Gastrocnemius medialis (tissue), 4 donors: ENCODE measurements at regions of chr3 and their contacts with region 1.

Region 1: GRCh38 chr3:12568747-12569146 is 11.9 kb downstream of the MKRN2 start:
- DNase-seq: no peak
- ATAC-seq: peak in 1 of 2 donors; percentile 43
- H3K4me3 ChIP-seq: no peak overlapping the region
- H3K27ac ChIP-seq: peak overlapping the region in 1 of 4 donors; percentile 6
- H3K4me1 ChIP-seq: peaks cover 14 to 20% of the 10 kb centered on the region in 2 donors
- H3K27me3 ChIP-seq: no peaks in the 10 kb centered on the region
- CTCF ChIP-seq: no peak
- POLR2A ChIP-seq: no peak

Region 2: DNA sequence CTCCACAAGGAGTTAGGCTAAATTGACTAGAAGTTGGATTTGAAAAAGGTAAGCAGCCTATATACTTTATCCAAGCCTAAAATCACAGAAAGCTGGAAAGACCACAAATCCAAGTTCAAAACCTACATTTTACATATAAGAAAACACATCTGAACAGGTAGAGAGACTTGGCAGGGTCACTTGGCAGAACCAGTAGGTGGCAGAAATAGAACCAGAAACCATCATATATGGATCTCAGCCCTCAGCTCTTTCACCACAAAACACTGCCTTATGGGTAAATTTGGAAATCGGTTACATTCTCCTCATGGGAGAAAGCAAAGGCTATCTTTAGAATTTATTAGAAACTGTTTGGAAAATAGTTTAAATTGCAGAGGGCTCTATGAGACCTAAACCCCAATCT is 32.3 kb after region 1 on chr3:
- in situ Hi-C with region 1: no loop called
- intact Hi-C with region 1: loop called (anchors 5 kb)
- DNase-seq: no peak
- ATAC-seq: no peak
- H3K4me3 ChIP-seq: no peak overlapping the region
- H3K27ac ChIP-seq: peak overlapping the region in 3 of 4 donors; percentile 2 to 27 (median 12)
- H3K4me1 ChIP-seq: peaks cover 0 to 7% of the 10 kb centered on the region in 2 donors
- H3K27me3 ChIP-seq: no peaks in the 10 kb centered on the region
- CTCF ChIP-seq: no peak
- POLR2A ChIP-seq: no peak

Region 3: GRCh38 chr3:12758025-12758830 is 189.5 kb after region 1 on chr3:
- in situ Hi-C with region 1: no loop called
- intact Hi-C with region 1: no loop called
- DNase-seq: peak in 1 of 2 donors; percentile 30
- ATAC-seq: peak; percentile 19
- H3K4me3 ChIP-seq: no peak overlapping the region
- H3K27ac ChIP-seq: peak overlapping the region; percentile 1 to 65 (median 35)
- H3K4me1 ChIP-seq: peaks cover 8 to 12% of the 10 kb centered on the region in 2 donors
- H3K27me3 ChIP-seq: no peaks in the 10 kb centered on the region
- CTCF ChIP-seq: no peak
- POLR2A ChIP-seq: no peak